ENCODE measurements at regions of chr4 and their contacts with region 1.

Region 1: DNA sequence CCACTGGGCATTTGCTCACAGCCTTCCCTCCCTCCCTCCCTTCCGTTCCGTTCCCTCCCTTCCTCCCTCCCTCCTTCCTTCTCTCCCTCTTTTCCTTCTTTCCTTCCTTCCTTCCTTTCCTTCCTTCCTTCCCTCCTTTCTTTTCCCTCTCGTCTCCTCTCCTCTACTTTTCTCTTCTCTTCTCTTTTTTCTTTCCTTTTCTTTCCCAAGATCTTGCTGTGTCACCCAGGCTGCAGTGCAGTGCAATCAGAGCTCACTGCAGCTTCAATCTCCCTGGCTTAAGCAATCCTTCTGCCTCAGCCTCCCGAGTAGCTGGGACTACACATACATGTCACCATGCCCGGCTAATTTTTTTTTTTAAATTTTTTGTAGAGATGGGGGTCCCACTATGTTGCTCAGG is 26.7 kb upstream of the ING2 start:
- DNase-seq: no peak
- H3K4me3 ChIP-seq: no peak overlapping the region
- H3K27ac ChIP-seq: no peak overlapping the region
- H3K4me1 ChIP-seq: no peaks in the 10 kb centered on the region
- H3K27me3 ChIP-seq: no peaks in the 10 kb centered on the region
- CTCF ChIP-seq: no peak

Region 2: GRCh38 chr4:183261953-183262775 is 216.0 kb before region 1 on chr4:
- CTCF ChIA-PET with region 1: no interaction called
- POLR2A ChIA-PET with region 1: no interaction called
- intact Hi-C with region 1: no loop called
- DNase-seq: peak; percentile 89
- H3K4me3 ChIP-seq: no peak overlapping the region
- H3K27ac ChIP-seq: no peak overlapping the region
- H3K4me1 ChIP-seq: peaks cover 26% of the 10 kb centered on the region
- H3K27me3 ChIP-seq: no peaks in the 10 kb centered on the region
- CTCF ChIP-seq: peak; percentile 78

Region 3: GRCh38 chr4:183437452-183437851 is 40.7 kb before region 1 on chr4:
- CTCF ChIA-PET with region 1: interaction called, 11 read pairs
- POLR2A ChIA-PET with region 1: no interaction called
- intact Hi-C with region 1: no loop called
- DNase-seq: no peak
- H3K4me3 ChIP-seq: no peak overlapping the region
- H3K27ac ChIP-seq: no peak overlapping the region
- H3K4me1 ChIP-seq: no peaks in the 10 kb centered on the region
- H3K27me3 ChIP-seq: no peaks in the 10 kb centered on the region
- CTCF ChIP-seq: no peak